Panc1 (cell line): ENCODE measurements at regions of chr3 and their contacts with region 1.

Region 1: GRCh38 chr3:4021162-4021561 is 221.9 kb downstream of the LRRN1 start:
- DNase-seq: no peak
- ATAC-seq: no peak
- H3K4me3 ChIP-seq: no peak overlapping the region
- H3K27ac ChIP-seq: no peak overlapping the region
- H3K4me1 ChIP-seq: no peaks in the 10 kb centered on the region
- H3K27me3 ChIP-seq: no peaks in the 10 kb centered on the region
- CTCF ChIP-seq: no peak

Region 2: GRCh38 chr3:3531476-3531875 is 489.7 kb before region 1 on chr3:
- CTCF ChIA-PET with region 1: no interaction called
- POLR2A ChIA-PET with region 1: no interaction called
- in situ Hi-C with region 1: no loop called
- intact Hi-C with region 1: no loop called
- DNase-seq: no peak
- ATAC-seq: no peak
- H3K4me3 ChIP-seq: no peak overlapping the region
- H3K27ac ChIP-seq: no peak overlapping the region
- H3K4me1 ChIP-seq: no peaks in the 10 kb centered on the region
- H3K27me3 ChIP-seq: no peaks in the 10 kb centered on the region
- CTCF ChIP-seq: no peak

Region 3: GRCh38 chr3:4006288-4006687 is 14.9 kb before region 1 on chr3:
- CTCF ChIA-PET with region 1: no interaction called
- POLR2A ChIA-PET with region 1: no interaction called
- in situ Hi-C with region 1: no loop called
- intact Hi-C with region 1: no loop called
- DNase-seq: no peak
- ATAC-seq: no peak
- H3K4me3 ChIP-seq: no peak overlapping the region
- H3K27ac ChIP-seq: no peak overlapping the region
- H3K4me1 ChIP-seq: no peaks in the 10 kb centered on the region
- H3K27me3 ChIP-seq: no peaks in the 10 kb centered on the region
- CTCF ChIP-seq: no peak

Region 4: GRCh38 chr3:4290272-4290893 is 269.2 kb after region 1 on chr3:
- CTCF ChIA-PET with region 1: interaction called, 10 read pairs
- POLR2A ChIA-PET with region 1: no interaction called
- in situ Hi-C with region 1: no loop called
- intact Hi-C with region 1: no loop called
- DNase-seq: peak; percentile 61
- ATAC-seq: peak; percentile 58; the same call in 1 of the 2 replicates
- H3K4me3 ChIP-seq: no peak overlapping the region
- H3K27ac ChIP-seq: no peak overlapping the region
- H3K4me1 ChIP-seq: no peaks in the 10 kb centered on the region
- H3K27me3 ChIP-seq: peaks cover 3% of the 10 kb centered on the region; the same call in 1 of the 2 replicates
- CTCF ChIP-seq: peak; percentile 76; the same call in 1 of the 2 replicates